Heart left ventricle (tissue), 16 donors: ENCODE measurements at regions of chr9 and their contacts with region 1.

Region 1: GRCh38 chr9:73023025-73023541 is 70.2 kb upstream of the ALDH1A1 start:
- DNase-seq: peak in 3 of 5 donors; percentile 35 to 53 (median 41)
- ATAC-seq: peak in 2 of 4 donors; percentile 30 to 76
- H3K4me3 ChIP-seq: no peak overlapping the region
- H3K27ac ChIP-seq: no peak overlapping the region
- H3K4me1 ChIP-seq: peaks cover 0 to 6% (median 0%) of the 10 kb centered on the region in 12 donors
- H3K27me3 ChIP-seq: no peaks in the 10 kb centered on the region
- CTCF ChIP-seq: peak; percentile 65 to 89 (median 82)
- POLR2A ChIP-seq: no peak

Region 2: GRCh38 chr9:72280913-72281500 is 742.1 kb before region 1 on chr9:
- intact Hi-C with region 1: loop called in 2 of 10 experiments (anchors 5 to 10 kb)
- DNase-seq: peak; percentile 60 to 80 (median 66)
- ATAC-seq: peak; percentile 86 to 90 (median 88)
- H3K4me3 ChIP-seq: no peak overlapping the region
- H3K27ac ChIP-seq: no peak overlapping the region
- H3K4me1 ChIP-seq: no peaks in the 10 kb centered on the region
- H3K27me3 ChIP-seq: no peaks in the 10 kb centered on the region
- CTCF ChIP-seq: peak; percentile 85 to 98 (median 90)
- POLR2A ChIP-seq: no peak

Region 3: GRCh38 chr9:72856972-72857623 is 166.0 kb before region 1 on chr9:
- intact Hi-C with region 1: loop called in 9 of 10 experiments (anchors 1 to 5 kb)
- DNase-seq: peak in 2 of 5 donors; percentile 18 to 23
- ATAC-seq: peak; percentile 55 to 83 (median 70)
- H3K4me3 ChIP-seq: no peak overlapping the region
- H3K27ac ChIP-seq: peak overlapping the region in 2 of 12 donors; percentile 32 to 46
- H3K4me1 ChIP-seq: peaks cover 0 to 30% (median 14%) of the 10 kb centered on the region in 12 donors
- H3K27me3 ChIP-seq: no peaks in the 10 kb centered on the region
- CTCF ChIP-seq: peak; percentile 44 to 81 (median 63)
- POLR2A ChIP-seq: no peak

Region 4: GRCh38 chr9:72871685-72872084 is 151.4 kb before region 1 on chr9:
- intact Hi-C with region 1: loop called (anchors 1 to 5 kb)
- DNase-seq: no peak
- ATAC-seq: no peak
- H3K4me3 ChIP-seq: peak overlapping the region in 5 of 12 donors; percentile 4 to 34 (median 25)
- H3K27ac ChIP-seq: no peak overlapping the region
- H3K4me1 ChIP-seq: peaks cover 0 to 20% (median 3%) of the 10 kb centered on the region in 12 donors
- H3K27me3 ChIP-seq: no peaks in the 10 kb centered on the region
- CTCF ChIP-seq: peak; percentile 14 to 61 (median 48)
- POLR2A ChIP-seq: no peak

Region 5: DNA sequence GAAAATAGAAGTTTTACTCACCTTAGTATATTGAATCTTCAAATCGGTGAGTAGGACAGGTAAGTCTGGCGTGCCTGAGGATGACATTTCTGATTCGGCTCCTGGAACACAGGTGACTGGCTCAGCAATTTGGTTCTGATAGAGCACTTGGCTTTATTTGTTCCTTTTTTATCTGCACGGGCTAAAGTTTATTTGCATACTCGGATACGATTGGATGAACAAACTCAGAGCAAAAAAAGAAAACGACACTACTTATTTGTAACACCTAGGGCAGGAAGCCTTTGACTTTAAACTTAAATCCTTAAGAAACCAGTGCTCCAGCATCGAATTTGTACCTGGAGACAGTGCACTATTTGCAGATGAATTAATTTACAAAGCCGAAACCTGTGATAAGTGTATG is 70.2 kb before region 1 on chr9 and contains the start of gene ALDH1A1:
- intact Hi-C with region 1: loop called in 2 of 10 experiments (anchors 5 to 10 kb)
- DNase-seq: no peak
- ATAC-seq: peak in 3 of 4 donors; percentile 42 to 62 (median 62)
- H3K4me3 ChIP-seq: peak within 1 kb of the TSS in 10 of 12 donors; percentile 18 to 62 (median 48)
- H3K27ac ChIP-seq: peak within 1 kb of the TSS; percentile 4 to 81 (median 52)
- H3K4me1 ChIP-seq: peaks cover 0 to 30% (median 0%) of the 10 kb centered on the region in 12 donors
- H3K27me3 ChIP-seq: no peaks in the 10 kb centered on the region
- CTCF ChIP-seq: no peak
- POLR2A ChIP-seq: peak in 1 of 2 donors; percentile 34
- total RNA-seq, gene ALDH1A1: 5.3 to 37.5 (median 12.6) TPM

Region 6: GRCh38 chr9:73081979-73082657 is 59.0 kb after region 1 on chr9:
- intact Hi-C with region 1: loop called in 3 of 10 experiments (anchors 5 to 10 kb)
- DNase-seq: no peak
- ATAC-seq: peak in 1 of 4 donors; percentile 60
- H3K4me3 ChIP-seq: no peak overlapping the region
- H3K27ac ChIP-seq: peak overlapping the region in 1 of 12 donors; percentile 27
- H3K4me1 ChIP-seq: peaks cover 0 to 4% (median 0%) of the 10 kb centered on the region in 12 donors
- H3K27me3 ChIP-seq: peaks cover 0 to 6% (median 0%) of the 10 kb centered on the region in 9 donors
- CTCF ChIP-seq: peak; percentile 54 to 85 (median 76)
- POLR2A ChIP-seq: no peak